ENCODE measurements at regions of chr5 and their contacts with region 1.

Region 1: GRCh38 chr5:78727786-78728761 is 79.5 kb upstream of the LHFPL2 start:
- DNase-seq: peak; percentile 96
- ATAC-seq: peak; percentile 91
- H3K4me3 ChIP-seq: peak overlapping the region; percentile 14; the same call in 1 of the 2 replicates
- H3K27ac ChIP-seq: peak overlapping the region; percentile 96
- H3K4me1 ChIP-seq: peaks cover 48% of the 10 kb centered on the region
- H3K27me3 ChIP-seq: no peaks in the 10 kb centered on the region
- CTCF ChIP-seq: no peak
- EP300 ChIP-seq: peak; percentile 92 to 95
- POLR2A ChIP-seq: no peak; the same call in 1 of the 2 replicates
- RAD21 ChIP-seq: no peak

Region 2: DNA sequence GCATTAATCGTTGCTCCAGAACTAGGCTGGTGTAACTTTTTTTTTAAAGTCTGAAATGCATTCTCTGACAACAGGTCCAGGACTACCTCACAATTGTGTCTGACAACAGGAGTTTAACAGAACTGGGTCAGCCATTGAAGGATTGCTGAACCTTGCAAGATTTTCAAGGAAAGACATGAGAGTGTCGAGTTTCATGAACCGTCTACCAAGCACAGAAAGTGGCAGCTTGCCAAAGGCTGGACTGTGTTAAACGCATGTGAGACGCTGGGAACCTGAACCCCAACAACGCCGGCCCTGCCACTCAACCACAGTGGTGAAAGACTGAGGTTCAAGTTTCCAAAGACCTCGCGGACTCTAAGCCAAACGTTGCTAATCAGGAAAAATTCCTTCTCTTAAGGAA is 158.6 kb before region 1 on chr5:
- CTCF ChIA-PET with region 1: interaction called, 4 read pairs
- POLR2A ChIA-PET with region 1: interaction called, 3 read pairs
- RAD21 ChIA-PET with region 1: interaction called, 5 read pairs
- SMC1A ChIA-PET with region 1: interaction called, 10 read pairs
- in situ Hi-C with region 1: no loop called
- intact Hi-C with region 1: no loop called
- DNase-seq: no peak
- ATAC-seq: no peak
- H3K4me3 ChIP-seq: no peak overlapping the region
- H3K27ac ChIP-seq: no peak overlapping the region
- H3K4me1 ChIP-seq: peaks cover 32% of the 10 kb centered on the region
- H3K27me3 ChIP-seq: no peaks in the 10 kb centered on the region
- CTCF ChIP-seq: no peak
- EP300 ChIP-seq: no peak
- POLR2A ChIP-seq: no peak
- RAD21 ChIP-seq: no peak

Region 3: DNA sequence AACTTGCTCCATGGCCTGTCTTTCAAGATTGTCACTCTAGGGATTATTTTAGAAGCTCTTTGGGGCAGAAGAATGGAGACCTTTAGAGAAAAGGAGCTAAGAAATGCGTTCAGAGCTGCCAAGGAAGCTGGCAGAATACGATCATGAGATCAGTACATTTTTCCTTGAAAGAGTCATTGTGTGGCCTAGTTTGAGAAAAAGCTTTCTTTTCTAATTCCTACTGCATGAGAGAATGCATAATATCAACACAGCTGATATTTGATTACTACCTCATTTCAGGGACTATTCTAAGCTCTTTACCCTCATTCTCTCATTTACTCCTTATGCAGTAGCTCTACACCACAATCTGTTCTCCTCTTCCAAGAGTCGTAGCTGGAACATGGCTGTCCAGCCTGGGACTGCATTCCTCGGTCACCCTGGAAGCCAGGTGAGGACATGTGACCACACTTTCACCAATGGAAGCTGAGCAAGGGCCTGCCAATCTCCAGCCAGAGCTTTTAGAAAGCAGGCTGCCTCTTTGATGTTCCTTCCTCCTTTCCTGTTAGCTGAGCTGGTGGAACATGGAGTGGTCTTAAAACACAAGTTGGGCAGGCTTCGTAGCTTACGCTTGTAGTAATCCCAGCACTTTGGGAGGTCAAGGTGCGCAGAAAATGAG is 19.8 kb after region 1 on chr5:
- CTCF ChIA-PET with region 1: interaction called, 3 read pairs
- POLR2A ChIA-PET with region 1: interaction called, 3 read pairs
- RAD21 ChIA-PET with region 1: interaction called, 8 read pairs
- SMC1A ChIA-PET with region 1: interaction called, 43 read pairs
- in situ Hi-C with region 1: no loop called
- intact Hi-C with region 1: no loop called
- DNase-seq: no peak
- ATAC-seq: no peak
- H3K4me3 ChIP-seq: no peak overlapping the region
- H3K27ac ChIP-seq: no peak overlapping the region
- H3K4me1 ChIP-seq: no peaks in the 10 kb centered on the region
- H3K27me3 ChIP-seq: no peaks in the 10 kb centered on the region
- CTCF ChIP-seq: no peak
- EP300 ChIP-seq: no peak
- POLR2A ChIP-seq: no peak
- RAD21 ChIP-seq: no peak

Region 4: GRCh38 chr5:78841767-78842166 is 113.7 kb after region 1 on chr5:
- CTCF ChIA-PET with region 1: no interaction called
- POLR2A ChIA-PET with region 1: interaction called, 3 read pairs
- RAD21 ChIA-PET with region 1: interaction called, 4 read pairs
- SMC1A ChIA-PET with region 1: interaction called, 4 read pairs
- in situ Hi-C with region 1: no loop called
- intact Hi-C with region 1: loop called (anchors 5 kb)
- DNase-seq: no peak
- ATAC-seq: peak; percentile 58
- H3K4me3 ChIP-seq: no peak overlapping the region
- H3K27ac ChIP-seq: no peak overlapping the region
- H3K4me1 ChIP-seq: no peaks in the 10 kb centered on the region
- H3K27me3 ChIP-seq: no peaks in the 10 kb centered on the region
- CTCF ChIP-seq: no peak
- EP300 ChIP-seq: no peak
- POLR2A ChIP-seq: no peak
- RAD21 ChIP-seq: no peak

Region 5: GRCh38 chr5:78984439-78985115 is 256.5 kb after region 1 on chr5:
- CTCF ChIA-PET with region 1: no interaction called
- POLR2A ChIA-PET with region 1: interaction called, 5 read pairs
- RAD21 ChIA-PET with region 1: interaction called, 6 read pairs
- SMC1A ChIA-PET with region 1: no interaction called
- in situ Hi-C with region 1: no loop called
- intact Hi-C with region 1: loop called (anchors 5 kb)
- DNase-seq: no peak
- ATAC-seq: peak; percentile 54
- H3K4me3 ChIP-seq: peak overlapping the region; percentile 94
- H3K27ac ChIP-seq: peak overlapping the region; percentile 90
- H3K4me1 ChIP-seq: peaks cover 15% of the 10 kb centered on the region; the same call in 1 of the 2 replicates
- H3K27me3 ChIP-seq: no peaks in the 10 kb centered on the region
- CTCF ChIP-seq: 0 out of 6 replicates have a peak, but pooled peaks of 2 of the 3 experiments have one; percentile 13 to 23
- EP300 ChIP-seq: 0 out of 4 replicates have a peak, but pooled peaks of 1 of the 2 experiments have one; percentile 32
- POLR2A ChIP-seq: peak; percentile 89
- RAD21 ChIP-seq: no peak

Measured in GM12878 (cell line).